ENCODE measurements at regions of chr19 and their contacts with region 1.

Region 1: DNA sequence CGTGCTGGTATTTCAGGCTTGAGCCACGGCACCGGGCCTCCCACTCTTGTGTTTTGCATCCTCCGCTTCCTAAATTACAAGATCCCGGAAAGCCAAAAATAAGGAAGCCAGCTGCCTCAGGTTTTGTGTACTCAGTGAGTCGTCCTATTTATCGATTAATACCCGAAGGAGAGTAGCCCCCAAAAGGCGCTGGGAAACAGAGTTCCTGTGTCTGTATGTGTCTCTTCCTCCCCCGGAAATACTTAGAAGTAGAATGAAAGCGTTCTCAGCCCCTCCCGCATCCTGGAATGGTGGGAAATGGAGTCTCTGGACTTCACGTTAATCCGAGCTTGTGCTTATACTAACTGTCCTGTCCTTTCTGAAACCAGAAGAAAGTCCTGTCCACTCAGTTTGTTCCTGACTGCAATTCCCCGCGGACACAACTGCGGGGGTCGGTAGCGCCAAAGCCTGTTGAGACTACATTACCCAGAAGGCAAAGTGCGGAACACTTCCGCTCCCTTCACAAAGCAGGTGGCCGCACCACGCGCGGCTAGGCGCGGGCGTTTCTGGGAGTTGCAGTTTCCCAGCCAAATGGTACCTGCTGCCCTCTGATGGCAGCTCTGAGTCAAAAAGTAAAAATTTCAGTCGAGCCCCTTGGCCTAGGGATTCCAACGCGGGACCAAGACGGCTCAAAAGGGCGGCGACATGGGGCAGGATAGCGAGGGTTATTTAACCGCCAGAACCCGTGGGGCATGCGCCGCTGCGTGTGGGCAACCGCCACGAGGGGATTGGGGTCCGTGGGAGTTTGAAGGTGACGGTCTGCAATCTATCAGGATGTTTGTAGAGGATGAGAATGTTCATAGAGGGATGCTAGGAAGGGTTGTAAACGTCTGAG is 2.2 kb upstream of the GSK3A start:
- DNase-seq: peak; percentile 92
- H3K4me3 Mint-ChIP-seq: peak overlapping the region; percentile 88
- H3K27ac Mint-ChIP-seq: peak overlapping the region; percentile 89
- H3K4me1 Mint-ChIP-seq: peaks cover 32% of the 10 kb centered on the region
- H3K27me3 Mint-ChIP-seq: no peaks in the 10 kb centered on the region

Region 2: DNA sequence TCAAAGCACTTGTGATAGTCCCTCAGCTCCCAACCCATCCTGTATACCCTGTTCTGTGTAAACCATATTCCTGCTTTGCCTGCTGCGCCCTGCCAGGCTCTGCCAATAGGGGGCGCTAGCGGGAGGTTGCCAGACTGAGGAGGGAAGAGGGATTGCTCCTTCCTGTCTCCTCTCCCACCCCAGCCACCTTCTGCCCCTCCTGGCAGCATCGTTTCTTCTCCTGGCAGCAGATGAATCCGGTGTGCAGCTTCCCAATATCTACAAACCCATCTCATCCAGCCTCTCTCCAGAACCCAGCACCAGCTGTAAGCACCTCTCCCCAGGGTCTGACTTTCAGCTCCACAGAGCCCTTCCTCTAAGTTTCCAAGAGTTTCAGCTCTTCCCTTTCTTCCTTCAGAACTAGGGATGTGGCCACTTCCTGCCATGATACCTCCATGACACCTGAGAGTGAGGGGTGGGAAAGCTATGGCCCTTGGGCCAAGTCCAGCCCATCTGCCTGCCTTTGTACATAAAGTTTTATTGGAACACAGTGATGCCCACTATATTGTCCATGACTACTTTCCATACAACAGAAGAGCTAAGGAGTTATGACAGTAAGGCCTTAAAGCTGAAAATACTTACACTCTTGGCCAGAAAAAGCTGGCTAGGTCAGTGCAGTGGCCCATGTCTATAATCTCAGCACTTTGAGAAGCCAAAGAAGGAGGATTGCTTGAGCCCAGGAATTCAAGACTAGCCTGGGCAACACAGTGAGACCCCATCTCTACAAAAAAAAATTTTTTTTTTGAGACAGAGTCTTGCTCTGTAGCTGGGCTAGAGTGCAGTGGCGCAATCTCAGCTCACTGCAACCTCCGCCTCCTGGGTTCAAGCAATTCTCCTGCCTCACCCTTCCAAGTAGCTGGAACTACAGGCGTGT is 216.0 kb before region 1 on chr19:
- intact Hi-C with region 1: no loop called
- DNase-seq: no peak
- H3K4me3 Mint-ChIP-seq: no peak overlapping the region
- H3K27ac Mint-ChIP-seq: no peak overlapping the region
- H3K4me1 Mint-ChIP-seq: no peaks in the 10 kb centered on the region
- H3K27me3 Mint-ChIP-seq: peaks cover 4% of the 10 kb centered on the region

Region 3: GRCh38 chr19:42108527-42109389 is 135.8 kb before region 1 on chr19:
- intact Hi-C with region 1: loop called (anchors 2 kb)
- DNase-seq: peak; percentile 82
- H3K4me3 Mint-ChIP-seq: no peak overlapping the region
- H3K27ac Mint-ChIP-seq: peak overlapping the region; percentile 8
- H3K4me1 Mint-ChIP-seq: peaks cover 35% of the 10 kb centered on the region
- H3K27me3 Mint-ChIP-seq: no peaks in the 10 kb centered on the region

Region 4: GRCh38 chr19:42254989-42255765 is 10.6 kb after region 1 on chr19 and contains the start of gene ERF:
- intact Hi-C with region 1: loop called (anchors 1 kb)
- DNase-seq: peak; percentile 91
- H3K4me3 Mint-ChIP-seq: peak within 1 kb of the TSS; percentile 74
- H3K27ac Mint-ChIP-seq: peak within 1 kb of the TSS; percentile 62
- H3K4me1 Mint-ChIP-seq: peaks cover 18% of the 10 kb centered on the region
- H3K27me3 Mint-ChIP-seq: peaks cover 7% of the 10 kb centered on the region
- total RNA-seq, gene ERF: 58.4 and 59.1 TPM in 2 replicates

Region 5: GRCh38 chr19:42283143-42284065 is 38.8 kb after region 1 on chr19:
- intact Hi-C with region 1: loop called (anchors 1 kb)
- DNase-seq: peak; percentile 91
- H3K4me3 Mint-ChIP-seq: no peak overlapping the region
- H3K27ac Mint-ChIP-seq: no peak overlapping the region
- H3K4me1 Mint-ChIP-seq: peaks cover 39% of the 10 kb centered on the region
- H3K27me3 Mint-ChIP-seq: no peaks in the 10 kb centered on the region

Region 6: DNA sequence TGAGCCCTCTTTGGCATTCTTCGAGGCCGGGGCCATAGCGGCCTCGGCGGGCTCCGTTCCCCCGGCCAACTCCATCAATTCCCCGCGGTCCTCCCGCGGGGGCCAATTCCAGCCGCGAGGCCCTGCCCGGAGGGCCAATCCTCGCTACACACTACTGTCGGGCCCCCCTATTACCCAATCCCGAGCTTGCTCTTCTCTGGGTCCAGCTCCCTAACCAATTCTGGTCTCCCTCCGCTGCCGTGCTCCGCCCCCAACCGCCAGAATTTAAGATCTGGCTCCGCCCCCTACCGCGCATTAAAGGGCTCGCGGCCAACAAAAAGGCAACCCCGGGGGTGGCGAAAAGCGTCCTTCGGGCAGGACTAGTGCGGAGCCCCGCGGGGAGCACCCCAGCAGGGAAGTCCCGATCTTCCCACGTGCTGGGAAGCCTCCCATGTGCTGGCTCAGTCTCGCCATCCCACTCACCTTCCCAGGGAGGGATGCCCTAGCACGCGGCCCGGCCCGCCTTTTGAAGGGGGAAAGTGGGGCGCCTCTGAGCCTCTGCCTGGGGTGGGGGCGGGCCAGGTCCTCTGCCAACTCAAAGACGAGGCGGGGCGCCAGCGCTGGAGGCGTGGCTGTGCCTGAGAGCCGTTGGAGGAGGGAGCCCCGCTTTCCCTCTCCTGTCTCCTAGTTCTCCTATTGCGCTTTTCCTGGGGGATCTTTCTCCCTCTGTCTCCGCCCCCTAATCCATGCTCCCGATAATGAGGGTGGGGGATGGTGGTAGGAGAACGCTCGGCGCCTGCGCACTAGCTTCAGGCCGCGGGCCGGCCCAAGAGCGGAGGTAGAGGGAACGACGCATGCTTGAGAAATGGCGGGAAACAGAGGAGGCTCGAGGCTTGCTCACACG is 179.1 kb after region 1 on chr19:
- intact Hi-C with region 1: loop called (anchors 5 kb)
- DNase-seq: peak; percentile 94
- H3K4me3 Mint-ChIP-seq: peak overlapping the region; percentile 99
- H3K27ac Mint-ChIP-seq: peak overlapping the region; percentile 89
- H3K4me1 Mint-ChIP-seq: peaks cover 33% of the 10 kb centered on the region
- H3K27me3 Mint-ChIP-seq: peaks cover 2% of the 10 kb centered on the region